Activated CD4-positive, alpha-beta T cell treated with anti-CD3 and anti-CD28 coated beads for 36 hours (primary cell): ENCODE measurements at regions of chr19 and their contacts with region 1.

Region 1: DNA sequence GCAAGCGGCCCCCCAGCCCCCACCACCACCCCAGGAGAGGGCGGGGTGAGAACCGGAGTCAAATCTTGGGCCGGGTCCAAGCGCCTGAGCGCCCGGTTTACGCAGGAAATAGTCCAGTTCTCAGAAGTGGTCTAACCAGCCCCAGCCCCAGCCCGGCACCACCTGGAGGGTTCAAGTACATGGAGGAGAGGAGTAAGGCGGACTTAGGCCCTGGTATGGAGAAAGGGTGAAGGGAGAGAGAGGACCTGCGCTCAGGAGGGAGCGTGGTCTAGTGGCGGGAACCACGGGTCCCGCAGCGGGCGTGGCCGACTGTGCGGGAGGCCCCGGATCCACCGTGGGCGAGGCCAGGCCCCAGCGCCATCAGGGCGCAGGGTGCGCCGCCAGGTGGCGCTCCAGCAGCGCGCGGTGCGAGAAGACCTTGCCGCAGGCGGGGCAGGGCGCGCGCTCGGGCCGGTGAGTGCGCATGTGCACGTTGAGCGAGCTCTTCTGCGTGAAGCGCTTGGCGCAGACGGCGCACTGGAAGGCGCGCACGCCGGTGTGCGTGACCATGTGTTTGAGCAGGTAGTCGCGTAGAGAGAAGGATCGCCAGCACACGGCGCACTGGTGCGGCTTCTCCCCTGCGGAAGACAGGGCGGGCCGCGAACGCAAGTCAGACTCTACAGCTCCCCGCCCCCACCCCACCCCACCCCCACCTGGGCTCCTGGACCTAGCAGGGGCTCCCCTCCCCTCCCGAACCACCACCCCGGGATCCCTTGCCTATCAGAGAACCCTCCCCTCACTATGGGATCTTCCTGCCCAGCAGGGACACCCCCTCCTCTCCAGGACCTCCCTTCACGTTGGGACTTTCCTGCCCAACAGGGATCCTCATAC is 2.1 kb upstream of the SLC27A5 start:
- DNase-seq: peak; percentile 99
- ATAC-seq: peak; percentile 88
- H3K4me3 Mint-ChIP-seq: peak overlapping the region; percentile 88
- H3K27ac Mint-ChIP-seq: peak overlapping the region; percentile 81
- H3K4me1 Mint-ChIP-seq: peaks cover 27% of the 10 kb centered on the region
- H3K27me3 Mint-ChIP-seq: no peaks in the 10 kb centered on the region

Region 2: GRCh38 chr19:57559404-57560025 is 954.4 kb before region 1 on chr19 and contains the start of gene ZNF550:
- CTCF ChIA-PET with region 1: no interaction called
- POLR2A ChIA-PET with region 1: no interaction called
- intact Hi-C with region 1: no loop called
- DNase-seq: peak; percentile 93
- ATAC-seq: peak; percentile 97
- H3K4me3 Mint-ChIP-seq: peak within 1 kb of the TSS; percentile 98
- H3K27ac Mint-ChIP-seq: peak within 1 kb of the TSS; percentile 93
- H3K4me1 Mint-ChIP-seq: peaks cover 22% of the 10 kb centered on the region
- H3K27me3 Mint-ChIP-seq: no peaks in the 10 kb centered on the region
- total RNA-seq, gene ZNF550: 11.8 to 11.9 TPM

Region 3: GRCh38 chr19:58362272-58362994 is 151.5 kb before region 1 on chr19 and contains the start of gene ZNF497:
- CTCF ChIA-PET with region 1: no interaction called
- POLR2A ChIA-PET with region 1: no interaction called
- intact Hi-C with region 1: loop called in 1 of 2 experiments (anchors 1 kb)
- DNase-seq: peak; percentile 99
- ATAC-seq: peak; percentile 94
- H3K4me3 Mint-ChIP-seq: peak within 1 kb of the TSS; percentile 86
- H3K27ac Mint-ChIP-seq: peak within 1 kb of the TSS; percentile 93
- H3K4me1 Mint-ChIP-seq: peaks cover 7% of the 10 kb centered on the region
- H3K27me3 Mint-ChIP-seq: no peaks in the 10 kb centered on the region
- total RNA-seq, gene ZNF497: 1.1 to 1.5 TPM

Region 4: GRCh38 chr19:58451358-58452101 is 62.4 kb before region 1 on chr19 and contains the start of gene ZNF324B:
- CTCF ChIA-PET with region 1: interaction called, 6 read pairs
- POLR2A ChIA-PET with region 1: no interaction called
- intact Hi-C with region 1: loop called in 1 of 2 experiments (anchors 1 kb)
- DNase-seq: peak; percentile 98
- ATAC-seq: peak; percentile 99
- H3K4me3 Mint-ChIP-seq: peak within 1 kb of the TSS; percentile 77
- H3K27ac Mint-ChIP-seq: peak within 1 kb of the TSS; percentile 55
- H3K4me1 Mint-ChIP-seq: peaks cover 25% of the 10 kb centered on the region
- H3K27me3 Mint-ChIP-seq: peaks cover 15% of the 10 kb centered on the region
- total RNA-seq, gene ZNF324B: 5.8 to 7.5 TPM

Region 5: DNA sequence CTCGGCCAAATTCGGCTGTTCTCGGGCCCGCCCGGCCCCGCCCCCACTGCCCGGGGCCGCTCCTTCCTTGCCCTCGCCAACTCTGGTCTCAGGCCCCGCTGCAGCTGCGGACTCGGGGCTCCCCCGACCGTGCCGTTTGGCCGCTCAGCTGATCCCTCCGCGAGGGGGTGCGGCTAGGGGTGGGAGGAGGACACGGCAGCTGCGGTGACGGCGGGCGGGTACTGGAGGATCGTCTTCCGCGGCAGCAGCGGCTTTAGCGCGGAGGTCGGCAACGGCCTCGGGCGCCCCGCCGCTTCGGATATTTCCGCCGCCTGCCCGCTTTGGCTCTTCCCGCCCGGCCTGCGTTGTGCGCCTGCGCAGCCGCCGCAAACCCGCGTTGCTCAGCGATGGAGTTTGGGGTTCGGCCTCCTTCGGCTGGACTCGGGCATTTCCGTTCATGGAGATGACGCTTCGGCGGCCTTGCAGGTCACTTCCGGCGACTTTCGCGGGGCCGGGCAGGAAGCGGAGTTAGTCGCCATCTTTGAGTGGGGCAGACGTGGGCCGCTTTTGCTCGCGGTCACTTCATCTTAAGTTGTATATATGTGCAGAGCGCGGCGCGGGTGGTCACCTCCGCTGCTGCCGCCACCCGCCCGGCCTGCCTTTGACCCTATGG is 44.8 kb after region 1 on chr19:
- CTCF ChIA-PET with region 1: interaction called, 22 read pairs
- POLR2A ChIA-PET with region 1: interaction called, 9 read pairs
- intact Hi-C with region 1: loop called (anchors 1 kb)
- DNase-seq: peak; percentile 100
- ATAC-seq: peak; percentile 69
- H3K4me3 Mint-ChIP-seq: peak overlapping the region; percentile 92
- H3K27ac Mint-ChIP-seq: peak overlapping the region; percentile 100
- H3K4me1 Mint-ChIP-seq: peaks cover 65% of the 10 kb centered on the region
- H3K27me3 Mint-ChIP-seq: no peaks in the 10 kb centered on the region

Region 6: DNA sequence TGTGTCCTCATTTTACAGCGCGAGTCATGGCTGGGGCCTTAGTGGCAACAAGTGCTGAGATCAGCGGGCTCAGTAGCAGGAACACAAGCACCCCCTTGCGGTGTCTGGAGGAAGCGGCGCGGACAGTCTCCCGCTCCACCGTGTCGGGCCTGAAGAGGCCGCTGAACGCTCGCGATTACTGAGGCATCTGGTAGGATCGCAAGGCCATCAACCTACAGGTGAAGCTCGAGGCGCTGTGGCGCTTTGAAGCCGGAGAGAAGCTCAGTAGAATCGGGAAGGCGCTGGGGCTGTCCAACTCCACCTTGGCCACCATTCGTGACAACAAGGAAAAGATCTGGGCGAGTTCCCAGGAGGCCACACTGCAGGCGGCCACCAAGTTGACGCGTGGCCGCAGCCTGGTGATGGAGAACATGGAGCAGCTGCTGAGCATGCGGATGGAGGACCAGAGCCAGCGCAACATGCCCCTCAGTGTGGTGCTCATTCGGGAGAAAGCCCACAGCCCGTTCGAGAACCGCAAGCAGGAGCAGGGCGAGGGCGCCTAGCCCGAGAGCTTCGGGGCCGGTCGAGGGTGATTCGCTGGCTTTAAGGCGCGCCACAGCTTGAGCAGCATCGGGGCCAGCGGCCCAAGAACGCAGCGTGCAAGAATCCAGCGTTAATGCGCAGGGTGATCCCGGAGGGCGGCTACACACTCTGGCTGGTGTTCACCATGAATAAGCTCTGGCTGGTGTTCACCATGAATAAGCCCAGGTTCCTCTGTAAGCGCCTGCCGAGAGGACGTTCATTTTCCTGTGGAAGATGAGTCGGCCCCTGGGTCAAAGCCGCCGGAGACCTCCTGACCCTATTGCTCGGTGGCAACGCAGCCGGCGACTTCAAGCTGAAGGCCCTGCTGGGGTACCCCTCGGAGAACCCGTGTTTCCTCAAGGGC is 67.6 kb after region 1 on chr19:
- CTCF ChIA-PET with region 1: interaction called, 78 read pairs
- POLR2A ChIA-PET with region 1: interaction called, 5 read pairs
- intact Hi-C with region 1: loop called (anchors 1 kb)
- DNase-seq: peak; percentile 97
- ATAC-seq: peak; percentile 95
- H3K4me3 Mint-ChIP-seq: no peak overlapping the region
- H3K27ac Mint-ChIP-seq: peak overlapping the region; percentile 84
- H3K4me1 Mint-ChIP-seq: peaks cover 33% of the 10 kb centered on the region
- H3K27me3 Mint-ChIP-seq: no peaks in the 10 kb centered on the region